Thyroid gland (tissue), 4 donors: ENCODE measurements at regions of chr1 and their contacts with region 1.

Region 1: GRCh38 chr1:235328357-235329138 is at the start of gene GGPS1:
- DNase-seq: peak; percentile 97 to 98
- H3K4me3 ChIP-seq: peak within 1 kb of the TSS; percentile 59 to 95 (median 85)
- H3K27ac ChIP-seq: peak within 1 kb of the TSS; percentile 94 to 98 (median 97)
- H3K4me1 ChIP-seq: peaks cover 39 to 40% of the 10 kb centered on the region in 2 donors
- H3K27me3 ChIP-seq: no peaks in the 10 kb centered on the region
- CTCF ChIP-seq: peak in 2 of 6 experiments; percentile 2 to 7
- POLR2A ChIP-seq: peak; percentile 87 to 92
- total RNA-seq, gene GGPS1: 24.3 to 42.7 (median 33.2) TPM

Region 2: GRCh38 chr1:235253219-235253962 is 75.2 kb before region 1 on chr1:
- intact Hi-C with region 1: loop called (anchors 10 kb)
- DNase-seq: peak; percentile 60 to 65
- H3K4me3 ChIP-seq: no peak overlapping the region
- H3K27ac ChIP-seq: no peak overlapping the region
- H3K4me1 ChIP-seq: no peaks in the 10 kb centered on the region
- H3K27me3 ChIP-seq: no peaks in the 10 kb centered on the region
- CTCF ChIP-seq: peak; percentile 47 to 89 (median 80)
- POLR2A ChIP-seq: no peak

Region 3: DNA sequence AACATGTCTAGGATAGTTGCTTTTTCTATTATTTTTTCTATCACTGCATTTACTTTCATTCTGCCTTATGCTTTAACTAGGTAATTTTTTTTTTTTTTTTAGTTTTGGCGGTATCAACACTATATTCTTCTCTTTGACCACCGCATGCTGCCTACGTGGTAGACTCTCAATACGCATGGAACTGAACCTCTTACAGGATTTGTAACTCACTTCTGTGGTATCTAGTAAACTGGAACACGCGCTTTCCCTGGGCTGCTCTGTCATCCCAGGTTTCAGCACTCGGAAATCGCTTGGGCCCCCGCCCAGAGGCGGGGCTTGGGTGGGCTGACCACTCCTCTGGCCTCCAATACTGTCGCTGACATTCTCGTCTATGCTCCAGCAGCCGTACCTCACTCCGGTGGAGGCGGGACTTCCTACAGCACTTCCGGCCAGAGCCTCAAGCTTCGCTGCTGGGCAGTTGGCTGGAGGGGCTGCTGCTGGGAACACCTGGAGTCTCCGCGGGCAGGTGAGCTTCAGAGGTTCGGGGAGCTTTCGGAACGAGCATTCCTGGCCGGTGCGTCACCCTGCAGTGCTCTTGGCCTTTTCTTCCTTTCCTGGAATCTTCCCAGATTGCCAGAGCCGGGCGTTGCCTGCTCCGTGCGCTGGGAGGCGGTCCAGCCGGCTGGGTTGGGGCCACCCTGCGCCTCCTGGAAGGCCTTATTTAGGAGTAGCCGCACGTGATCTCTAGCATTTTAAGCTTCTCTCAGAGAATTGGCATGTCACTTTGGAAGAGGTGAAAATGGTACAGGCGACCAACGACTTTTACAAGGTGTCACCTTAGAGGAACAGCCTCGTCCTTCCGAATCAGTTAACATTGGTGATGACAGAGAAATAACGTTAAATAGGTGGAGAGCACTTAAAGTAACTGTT is 38.7 kb after region 1 on chr1 and contains the start of gene TBCE:
- intact Hi-C with region 1: loop called (anchors 5 kb)
- DNase-seq: peak; percentile 99
- H3K4me3 ChIP-seq: peak within 1 kb of the TSS; percentile 33 to 52 (median 48)
- H3K27ac ChIP-seq: peak within 1 kb of the TSS; percentile 43 to 84 (median 84)
- H3K4me1 ChIP-seq: peaks cover 4 to 19% of the 10 kb centered on the region in 2 donors
- H3K27me3 ChIP-seq: no peaks in the 10 kb centered on the region
- CTCF ChIP-seq: peak in 3 of 6 experiments; percentile 21 to 31 (median 22)
- POLR2A ChIP-seq: peak; percentile 57 to 97
- total RNA-seq, gene TBCE: 38.0 to 50.3 (median 44.8) TPM

Region 4: DNA sequence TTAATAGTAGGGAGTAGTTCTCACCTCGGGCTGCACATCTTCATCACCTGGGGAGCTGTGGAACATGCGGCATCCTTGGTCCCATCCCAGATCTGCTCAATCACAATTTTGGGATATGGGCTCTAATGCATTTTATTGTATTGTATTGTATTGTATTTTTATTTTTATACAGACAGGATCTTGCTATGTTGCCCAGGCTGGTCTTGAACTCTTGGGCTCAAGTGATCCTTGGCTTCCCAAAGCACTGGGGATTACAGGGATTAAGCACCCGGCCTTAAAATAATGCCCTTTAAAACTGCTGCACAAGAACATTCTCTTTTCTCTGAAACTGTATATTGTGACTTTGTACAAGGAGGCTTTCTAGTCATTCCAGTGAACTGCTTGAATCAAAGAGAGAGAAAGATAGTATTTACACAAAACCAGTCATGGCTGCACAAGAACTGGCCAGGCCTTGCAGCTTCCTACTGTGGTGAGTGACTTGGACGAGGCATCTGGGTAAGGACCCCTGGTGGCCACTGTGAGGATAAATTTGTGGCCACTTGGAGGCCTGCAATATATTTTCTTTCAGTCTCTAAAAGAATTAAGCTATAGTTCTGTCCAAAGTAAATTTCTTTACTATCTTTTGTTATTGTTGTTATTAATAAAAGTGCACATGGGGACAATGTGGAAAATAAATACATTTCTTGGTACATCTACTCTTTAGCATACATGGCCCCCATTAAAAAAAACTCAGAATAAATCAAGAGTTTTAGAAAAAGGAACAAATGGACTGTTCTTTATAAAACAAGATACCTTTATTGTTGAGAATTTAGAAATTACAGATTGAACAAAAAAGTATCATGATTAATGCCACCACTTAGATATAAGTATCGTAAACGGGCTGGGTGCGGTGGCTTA is 86.7 kb after region 1 on chr1:
- intact Hi-C with region 1: loop called (anchors 5 kb)
- DNase-seq: peak; percentile 82 to 88
- H3K4me3 ChIP-seq: no peak overlapping the region
- H3K27ac ChIP-seq: peak overlapping the region; percentile 31 to 54 (median 37)
- H3K4me1 ChIP-seq: peaks cover 12 to 26% of the 10 kb centered on the region in 2 donors
- H3K27me3 ChIP-seq: no peaks in the 10 kb centered on the region
- CTCF ChIP-seq: peak; percentile 64 to 88 (median 84)
- POLR2A ChIP-seq: no peak

Region 5: GRCh38 chr1:235588916-235589515 is 260.5 kb after region 1 on chr1:
- intact Hi-C with region 1: no loop called
- DNase-seq: no peak
- H3K4me3 ChIP-seq: no peak overlapping the region
- H3K27ac ChIP-seq: no peak overlapping the region
- H3K4me1 ChIP-seq: no peaks in the 10 kb centered on the region
- H3K27me3 ChIP-seq: no peaks in the 10 kb centered on the region
- CTCF ChIP-seq: no peak
- POLR2A ChIP-seq: no peak